ENCODE measurements at regions of chr18 and their contacts with region 1.

Region 1: DNA sequence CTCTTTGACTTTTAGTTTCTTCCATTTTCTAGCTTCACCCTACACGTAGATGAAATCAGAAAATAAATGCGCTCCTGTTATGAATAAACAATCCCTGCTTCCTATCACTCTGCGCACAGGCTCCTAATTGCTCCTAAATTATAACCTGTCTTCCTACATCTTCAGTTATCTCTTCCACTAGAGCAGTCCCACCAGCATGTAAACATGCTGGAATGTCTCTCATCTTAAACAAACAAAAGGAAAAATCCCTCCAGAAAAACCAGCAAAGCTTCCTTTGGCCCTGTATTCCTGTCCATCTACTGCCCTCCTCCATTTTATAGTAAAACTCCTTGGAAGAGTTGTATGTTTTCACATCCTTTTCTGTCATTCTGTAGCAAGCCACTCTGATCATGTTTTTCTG is 86.1 kb downstream of the SMCHD1 start:
- DNase-seq: no peak
- ATAC-seq: no peak
- H3K4me3 Mint-ChIP-seq: no peak overlapping the region
- H3K27ac Mint-ChIP-seq: no peak overlapping the region
- H3K4me1 Mint-ChIP-seq: no peaks in the 10 kb centered on the region
- H3K27me3 Mint-ChIP-seq: no peaks in the 10 kb centered on the region
- CTCF ChIP-seq: no peak

Region 2: DNA sequence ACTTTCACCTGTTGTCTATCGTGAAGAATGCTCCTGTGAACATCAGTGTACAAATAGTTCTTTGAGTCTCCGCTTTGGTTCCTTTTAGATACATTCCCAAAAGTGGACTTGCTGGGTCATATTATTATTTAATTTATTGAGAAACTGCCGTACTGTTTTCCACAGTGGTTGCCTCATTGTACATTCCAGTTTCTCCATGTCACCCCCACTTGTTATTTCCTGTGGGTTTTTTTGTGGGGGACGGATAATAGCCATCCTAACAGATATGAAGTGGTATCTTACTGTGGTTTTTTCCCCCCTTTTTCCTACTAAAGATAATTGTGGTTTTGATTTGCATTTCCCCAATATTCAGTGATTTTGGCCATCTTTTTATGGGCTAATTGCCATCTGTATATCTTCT is 32.3 kb before region 1 on chr18:
- CTCF ChIA-PET with region 1: no interaction called
- POLR2A ChIA-PET with region 1: no interaction called
- intact Hi-C with region 1: loop called (anchors 5 kb)
- DNase-seq: no peak
- ATAC-seq: no peak
- H3K4me3 Mint-ChIP-seq: no peak overlapping the region
- H3K27ac Mint-ChIP-seq: no peak overlapping the region
- H3K4me1 Mint-ChIP-seq: peaks cover 11% of the 10 kb centered on the region
- H3K27me3 Mint-ChIP-seq: no peaks in the 10 kb centered on the region
- CTCF ChIP-seq: no peak

Region 3: DNA sequence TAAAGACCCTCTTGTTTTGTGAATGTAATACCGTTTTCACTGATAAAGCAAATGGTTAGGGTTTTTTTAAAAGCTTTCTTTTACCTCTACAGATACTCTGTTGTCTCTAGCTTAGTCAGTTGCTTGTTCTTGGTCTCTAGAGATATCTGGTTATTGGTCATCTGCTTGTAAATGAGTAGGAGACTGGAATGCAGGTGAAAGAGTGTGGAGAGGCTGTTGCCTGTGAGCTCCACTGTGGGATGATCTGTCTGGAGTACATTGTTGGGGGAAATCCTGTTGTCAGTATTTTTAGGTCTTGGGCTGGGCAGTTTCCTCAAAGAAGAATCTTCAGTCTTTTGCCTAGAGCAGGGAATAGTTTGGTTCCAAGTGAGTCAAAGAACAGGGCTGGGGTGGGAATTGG is 18.4 kb before region 1 on chr18:
- CTCF ChIA-PET with region 1: no interaction called
- POLR2A ChIA-PET with region 1: no interaction called
- intact Hi-C with region 1: loop called (anchors 2 kb)
- DNase-seq: no peak
- ATAC-seq: no peak
- H3K4me3 Mint-ChIP-seq: no peak overlapping the region
- H3K27ac Mint-ChIP-seq: peak overlapping the region; percentile 71
- H3K4me1 Mint-ChIP-seq: peaks cover 6% of the 10 kb centered on the region
- H3K27me3 Mint-ChIP-seq: no peaks in the 10 kb centered on the region
- CTCF ChIP-seq: no peak

Region 4: DNA sequence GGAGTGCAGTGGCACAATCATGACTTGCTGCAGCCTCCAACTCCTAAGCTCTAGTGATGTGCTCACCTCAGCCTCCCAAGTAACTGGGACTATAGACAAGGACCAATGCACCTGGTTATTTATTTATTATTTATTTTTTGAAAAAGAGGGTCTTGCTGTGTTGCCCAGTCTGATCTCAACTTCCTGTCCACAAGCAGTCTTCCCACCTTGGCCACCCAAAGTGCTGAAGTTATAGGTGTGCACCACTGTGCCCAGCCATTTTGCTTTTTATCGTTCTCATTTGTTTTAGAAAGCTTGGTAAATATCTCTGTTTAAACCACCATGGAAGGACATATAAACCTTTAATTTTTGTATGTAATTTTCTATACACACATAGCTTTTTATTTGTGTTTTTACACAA is 11.9 kb before region 1 on chr18:
- CTCF ChIA-PET with region 1: interaction called, 3 read pairs
- POLR2A ChIA-PET with region 1: no interaction called
- intact Hi-C with region 1: loop called (anchors 1 kb)
- DNase-seq: no peak
- ATAC-seq: no peak
- H3K4me3 Mint-ChIP-seq: no peak overlapping the region
- H3K27ac Mint-ChIP-seq: no peak overlapping the region
- H3K4me1 Mint-ChIP-seq: peaks cover 3% of the 10 kb centered on the region
- H3K27me3 Mint-ChIP-seq: no peaks in the 10 kb centered on the region
- CTCF ChIP-seq: no peak

Region 5: DNA sequence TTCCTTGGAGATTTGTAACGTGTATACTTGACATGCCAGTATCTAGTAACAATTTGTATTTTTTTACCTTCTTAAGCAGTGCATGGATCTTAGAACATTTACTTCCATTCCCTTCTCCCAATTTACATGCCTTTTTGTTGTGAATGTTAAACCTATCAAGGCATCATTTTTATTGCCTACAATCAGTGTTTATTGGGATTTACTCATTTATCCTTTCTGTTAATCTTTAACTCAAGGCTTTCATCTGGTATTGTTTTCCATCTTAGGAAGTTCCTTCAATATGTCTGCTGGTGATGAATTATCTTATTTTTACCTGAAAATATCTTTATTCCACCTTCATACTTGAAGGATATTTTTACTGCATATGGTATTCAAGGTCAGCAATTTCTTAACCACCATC is 16.7 kb after region 1 on chr18:
- CTCF ChIA-PET with region 1: no interaction called
- POLR2A ChIA-PET with region 1: no interaction called
- intact Hi-C with region 1: no loop called
- DNase-seq: no peak
- ATAC-seq: no peak
- H3K4me3 Mint-ChIP-seq: no peak overlapping the region
- H3K27ac Mint-ChIP-seq: peak overlapping the region; percentile 57
- H3K4me1 Mint-ChIP-seq: peaks cover 2% of the 10 kb centered on the region
- H3K27me3 Mint-ChIP-seq: no peaks in the 10 kb centered on the region
- CTCF ChIP-seq: no peak

Region 6: GRCh38 chr18:2776601-2777000 is 35.0 kb after region 1 on chr18:
- CTCF ChIA-PET with region 1: no interaction called
- POLR2A ChIA-PET with region 1: no interaction called
- intact Hi-C with region 1: loop called (anchors 5 kb)
- DNase-seq: no peak
- ATAC-seq: no peak
- H3K4me3 Mint-ChIP-seq: no peak overlapping the region
- H3K27ac Mint-ChIP-seq: no peak overlapping the region
- H3K4me1 Mint-ChIP-seq: no peaks in the 10 kb centered on the region
- H3K27me3 Mint-ChIP-seq: no peaks in the 10 kb centered on the region
- CTCF ChIP-seq: no peak

Measured in activated B cell treated with CpG ODN at 0.5 μM for 24 hours (primary cell).